ENCODE measurements at regions of chr16 and their contacts with region 1.

Region 1: DNA sequence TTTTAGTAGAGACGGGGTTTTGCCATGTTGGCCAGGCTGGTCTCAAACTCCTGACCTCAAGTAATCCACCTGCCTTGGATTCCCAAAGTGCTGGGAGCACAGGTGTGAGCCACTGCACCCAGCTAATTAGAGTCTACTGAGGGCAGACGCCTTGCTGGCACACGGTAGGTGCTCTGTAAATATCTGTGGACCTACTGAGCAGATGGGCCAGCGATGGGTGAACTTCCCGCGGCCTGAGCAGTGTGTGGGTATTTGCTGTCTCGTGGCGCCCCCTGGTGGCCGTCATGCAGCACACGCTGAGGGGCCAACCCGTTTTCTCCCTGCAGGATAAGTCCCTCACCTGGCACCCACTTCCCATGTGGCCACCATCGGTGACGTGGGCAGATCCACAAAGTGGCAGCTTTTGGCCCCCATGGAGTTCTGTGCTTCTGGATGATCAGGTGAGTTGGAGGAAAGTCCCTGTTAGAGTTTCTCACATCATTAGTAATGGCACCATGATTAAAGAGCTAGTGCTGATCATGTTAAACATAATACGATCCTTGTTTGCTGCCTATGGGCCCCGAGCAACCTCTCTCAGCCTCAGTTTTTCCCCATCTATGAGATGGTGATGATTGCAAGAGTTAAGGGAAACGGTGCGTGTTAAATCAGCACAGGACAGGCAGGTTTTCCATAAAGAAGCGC is 40.7 kb downstream of the ZDHHC7 start:
- DNase-seq: peak; percentile 52
- H3K4me3 ChIP-seq: no peak overlapping the region
- H3K27ac ChIP-seq: no peak overlapping the region
- H3K4me1 ChIP-seq: no peaks in the 10 kb centered on the region
- H3K27me3 ChIP-seq: no peaks in the 10 kb centered on the region
- CTCF ChIP-seq: peak; percentile 78 to 92

Region 2: DNA sequence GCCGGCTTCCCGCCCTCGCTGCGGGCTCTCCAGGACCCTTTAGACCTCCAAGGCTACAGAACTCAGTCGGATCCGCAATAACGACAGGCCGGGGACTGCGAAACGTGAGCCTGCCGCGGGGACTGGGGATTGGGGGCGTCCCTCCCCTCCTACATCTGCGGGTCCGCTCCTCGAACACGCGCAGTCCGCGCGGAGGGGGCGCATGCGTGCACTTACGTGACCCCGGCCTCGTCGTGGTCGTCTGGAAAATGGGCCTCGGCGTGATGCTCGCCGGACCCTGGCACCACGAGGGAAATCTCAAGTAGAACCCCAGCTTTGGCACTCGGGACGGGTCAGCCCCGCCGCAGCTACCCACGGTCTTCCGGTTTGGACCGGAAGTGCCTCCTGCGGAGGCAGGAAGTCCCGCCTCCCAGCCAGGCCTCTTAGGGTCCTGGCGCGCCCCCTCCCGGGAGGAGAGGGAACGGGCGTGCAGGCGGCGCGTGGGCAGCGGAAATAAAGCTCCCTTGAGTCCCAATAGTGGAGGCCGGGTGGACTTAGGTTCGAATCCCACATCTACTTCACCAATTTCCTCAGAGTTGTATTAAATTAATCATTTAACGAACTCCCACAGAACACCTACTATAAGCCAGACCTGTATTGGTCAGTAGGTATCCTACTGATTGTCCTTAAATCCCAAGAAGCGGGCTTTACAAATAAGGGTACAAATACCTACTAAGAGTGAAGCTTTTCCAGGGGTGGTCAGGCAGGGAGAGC is 783.7 kb before region 1 on chr16 and contains the start of gene TAF1C:
- CTCF ChIA-PET with region 1: no interaction called
- dilution Hi-C with region 1: no loop called
- in situ Hi-C with region 1: no loop called
- intact Hi-C with region 1: loop called (anchors 5 kb)
- DNase-seq: peak; percentile 87
- H3K4me3 ChIP-seq: peak within 1 kb of the TSS; percentile 92 to 97 (median 97)
- H3K27ac ChIP-seq: peak within 1 kb of the TSS; percentile 51
- H3K4me1 ChIP-seq: peaks cover 3% of the 10 kb centered on the region
- H3K27me3 ChIP-seq: no peaks in the 10 kb centered on the region
- CTCF ChIP-seq: peak; percentile 81 to 98
- total RNA-seq, gene TAF1C: 15.3 to 30.1 TPM

Region 3: DNA sequence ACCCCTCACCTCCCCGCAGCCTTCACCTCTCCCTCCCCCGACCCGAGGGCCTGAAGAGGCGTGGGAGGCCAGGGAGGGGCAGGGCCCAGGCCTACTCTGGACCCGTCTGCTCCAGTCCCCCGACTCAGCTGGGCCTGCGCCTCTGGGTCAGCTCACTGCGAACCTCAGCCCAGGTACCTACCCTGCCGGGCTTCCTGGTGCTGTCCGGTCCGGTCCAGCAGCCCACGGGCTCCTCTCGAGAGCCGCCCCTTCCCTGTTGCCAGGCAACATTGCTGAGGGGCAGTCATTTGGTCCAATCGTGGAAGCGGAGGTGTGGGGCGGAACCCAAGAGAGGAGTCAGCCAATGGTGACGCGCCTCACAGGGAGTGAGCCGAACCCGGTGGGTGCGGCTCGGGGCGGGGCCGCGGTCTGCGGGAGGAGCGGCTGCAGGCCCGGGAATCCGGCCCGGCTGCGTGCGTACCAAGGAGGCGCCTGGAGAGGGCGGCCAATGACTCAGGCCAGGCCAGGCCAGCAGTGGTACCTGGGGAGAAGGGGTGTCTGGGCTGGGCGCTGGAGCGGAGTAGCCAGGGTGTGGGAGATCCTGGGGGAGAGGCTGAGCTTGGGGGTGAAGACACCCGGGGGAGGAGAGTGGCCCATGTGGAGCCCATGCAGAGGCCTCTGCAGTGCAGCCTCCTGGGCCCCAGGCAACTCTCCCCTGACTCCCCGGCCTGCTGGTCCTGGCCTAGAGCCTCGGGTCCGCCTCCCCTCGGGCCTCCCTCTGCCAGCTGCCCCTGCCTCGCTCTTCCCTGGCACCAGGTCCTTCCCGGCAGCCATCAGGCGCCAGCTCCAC is 466.0 kb before region 1 on chr16 and contains the start of gene MEAK7:
- CTCF ChIA-PET with region 1: no interaction called
- dilution Hi-C with region 1: loop called (anchors 10 kb)
- in situ Hi-C with region 1: loop called in 1 of 2 experiments (anchors 25 kb)
- intact Hi-C with region 1: no loop called
- DNase-seq: peak; percentile 99
- H3K4me3 ChIP-seq: peak within 1 kb of the TSS; percentile 69 to 96 (median 96)
- H3K27ac ChIP-seq: peak within 1 kb of the TSS; percentile 92
- H3K4me1 ChIP-seq: peaks cover 53% of the 10 kb centered on the region
- H3K27me3 ChIP-seq: no peaks in the 10 kb centered on the region
- CTCF ChIP-seq: peak in 1 of 2 donors; percentile 8
- total RNA-seq, gene MEAK7: 73.5 to 107 TPM

Region 4: GRCh38 chr16:84617791-84618580 is 352.6 kb before region 1 on chr16 and contains the start of gene COTL1:
- CTCF ChIA-PET with region 1: interaction called, 3 read pairs
- dilution Hi-C with region 1: no loop called
- in situ Hi-C with region 1: no loop called
- intact Hi-C with region 1: loop called (anchors 5 kb)
- DNase-seq: peak; percentile 97
- H3K4me3 ChIP-seq: peak within 1 kb of the TSS; percentile 75 to 93 (median 91)
- H3K27ac ChIP-seq: peak within 1 kb of the TSS; percentile 77
- H3K4me1 ChIP-seq: peaks cover 36% of the 10 kb centered on the region
- H3K27me3 ChIP-seq: no peaks in the 10 kb centered on the region
- CTCF ChIP-seq: no peak
- total RNA-seq, gene COTL1: 79.2 to 202 TPM

Region 5: DNA sequence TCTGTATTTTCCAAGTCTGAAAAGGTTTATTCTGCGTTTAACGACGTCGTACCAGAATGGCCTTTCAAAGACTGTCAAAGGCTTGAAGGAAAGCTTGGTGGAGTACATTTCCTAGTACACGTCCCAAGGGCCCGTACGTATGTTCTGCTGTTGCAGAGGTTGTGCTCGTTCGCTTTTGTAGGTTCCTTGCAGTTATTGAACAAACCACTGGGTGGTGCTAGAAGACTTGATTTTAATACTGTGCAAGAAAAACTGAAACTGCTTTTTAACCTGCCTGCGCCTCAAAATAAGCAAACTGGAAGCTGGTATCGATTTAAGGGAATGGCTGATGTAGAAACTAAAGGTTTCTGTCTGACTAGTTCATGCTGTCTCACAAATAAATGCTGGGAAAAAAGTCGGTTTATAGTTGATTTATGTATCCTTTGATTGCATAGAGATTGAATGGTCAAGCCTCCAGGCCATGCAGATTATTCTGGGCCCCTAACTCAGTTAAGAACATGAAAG is 216.2 kb before region 1 on chr16:
- CTCF ChIA-PET with region 1: interaction called, 5 read pairs
- dilution Hi-C with region 1: no loop called
- in situ Hi-C with region 1: loop called (anchors 5 to 10 kb)
- intact Hi-C with region 1: loop called (anchors 1 kb)
- DNase-seq: peak; percentile 84
- H3K4me3 ChIP-seq: peak overlapping the region in 2 of 3 experiments; percentile 6 to 34
- H3K27ac ChIP-seq: peak overlapping the region; percentile 85
- H3K4me1 ChIP-seq: peaks cover 35% of the 10 kb centered on the region
- H3K27me3 ChIP-seq: no peaks in the 10 kb centered on the region
- CTCF ChIP-seq: peak; percentile 77 to 80

Region 6: GRCh38 chr16:84952335-84953189 is 18.0 kb before region 1 on chr16:
- CTCF ChIA-PET with region 1: no interaction called
- dilution Hi-C with region 1: no loop called
- in situ Hi-C with region 1: no loop called
- intact Hi-C with region 1: loop called (anchors 2 kb)
- DNase-seq: peak; percentile 55
- H3K4me3 ChIP-seq: no peak overlapping the region
- H3K27ac ChIP-seq: no peak overlapping the region
- H3K4me1 ChIP-seq: peaks cover 4% of the 10 kb centered on the region
- H3K27me3 ChIP-seq: no peaks in the 10 kb centered on the region
- CTCF ChIP-seq: peak; percentile 81 to 89

Region 7: DNA sequence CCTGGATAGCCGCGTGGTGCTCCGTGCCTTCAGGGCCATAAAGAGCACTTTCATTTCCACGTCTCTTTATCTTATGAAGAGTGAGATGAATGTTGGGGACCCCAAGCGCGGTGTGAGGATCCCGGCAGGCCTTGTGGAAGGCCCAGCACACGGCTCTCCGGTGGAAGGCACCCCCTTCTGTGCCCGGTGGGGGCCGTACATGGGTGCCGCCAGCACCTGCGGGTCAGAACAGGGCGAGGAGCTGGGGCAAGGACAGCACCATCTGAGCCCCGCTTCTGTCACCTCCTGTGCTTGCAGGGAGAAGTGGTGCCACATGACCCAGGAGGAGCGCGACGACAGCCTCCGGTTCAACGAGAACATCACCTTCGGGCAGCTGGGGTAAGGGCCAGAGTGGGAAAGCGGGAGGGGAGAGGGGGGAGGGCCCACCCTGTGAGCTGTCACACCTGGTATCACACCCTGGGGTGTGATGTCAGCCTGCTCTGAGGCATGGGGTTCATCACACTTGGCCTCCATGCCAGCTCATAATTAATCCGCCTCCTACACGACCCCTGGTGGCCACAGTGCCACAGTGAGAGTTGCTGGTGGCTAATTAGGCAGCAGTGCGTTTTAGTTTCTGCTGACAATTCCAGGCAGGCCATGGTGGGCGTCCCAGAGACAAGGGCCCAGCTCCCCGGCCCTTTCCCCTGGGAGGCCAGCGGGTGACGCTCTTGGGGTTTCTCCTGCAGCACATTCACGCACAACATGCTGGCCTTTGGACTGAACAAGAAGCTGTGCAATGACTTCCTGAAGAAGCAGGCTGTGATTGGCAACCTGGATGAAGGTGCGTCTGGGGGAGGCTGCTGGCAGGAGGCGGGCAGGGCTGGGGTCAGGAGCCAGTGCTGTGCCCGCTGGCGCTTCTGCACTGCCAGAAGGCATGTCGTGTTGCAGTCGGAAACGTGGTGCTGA is 116.0 kb after region 1 on chr16:
- CTCF ChIA-PET with region 1: interaction called, 3 read pairs
- dilution Hi-C with region 1: no loop called
- in situ Hi-C with region 1: no loop called
- intact Hi-C with region 1: loop called (anchors 2 kb)
- DNase-seq: peak; percentile 62
- H3K4me3 ChIP-seq: no peak overlapping the region
- H3K27ac ChIP-seq: no peak overlapping the region
- H3K4me1 ChIP-seq: peaks cover 26% of the 10 kb centered on the region
- H3K27me3 ChIP-seq: no peaks in the 10 kb centered on the region
- CTCF ChIP-seq: peak; percentile 82 to 85

Measured in mammary epithelial cell (primary cell).